ENCODE measurements at regions of chr12 and their contacts with region 1.

Region 1: DNA sequence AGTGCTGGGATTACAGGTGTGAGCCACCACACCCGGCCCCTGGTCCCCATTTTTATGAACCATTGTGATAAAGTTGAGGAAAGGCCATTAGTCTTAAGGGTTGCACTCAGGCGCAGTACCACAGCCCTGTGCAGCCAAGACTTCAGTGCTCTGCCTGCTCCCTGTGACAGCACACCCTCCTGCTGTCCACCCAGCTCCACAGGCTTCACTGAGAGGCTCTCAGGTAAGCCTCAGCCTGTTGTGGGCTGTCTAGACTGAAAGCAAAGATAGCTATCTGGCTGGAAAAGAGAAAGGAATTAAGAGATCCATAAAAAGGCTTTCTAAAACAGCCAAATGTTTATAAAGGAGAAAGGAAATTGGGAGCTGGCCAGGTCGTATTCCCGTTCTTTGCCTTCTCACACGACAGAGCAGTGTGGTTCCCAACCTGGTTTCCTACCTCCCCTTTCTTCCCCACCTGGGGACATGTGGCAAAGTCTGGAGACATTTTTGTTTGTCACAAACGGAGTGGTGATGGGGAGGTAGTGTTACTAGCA is 19.1 kb upstream of the DNM1L start:
- DNase-seq: no peak
- H3K4me3 ChIP-seq: no peak overlapping the region
- CTCF ChIP-seq: no peak

Region 2: DNA sequence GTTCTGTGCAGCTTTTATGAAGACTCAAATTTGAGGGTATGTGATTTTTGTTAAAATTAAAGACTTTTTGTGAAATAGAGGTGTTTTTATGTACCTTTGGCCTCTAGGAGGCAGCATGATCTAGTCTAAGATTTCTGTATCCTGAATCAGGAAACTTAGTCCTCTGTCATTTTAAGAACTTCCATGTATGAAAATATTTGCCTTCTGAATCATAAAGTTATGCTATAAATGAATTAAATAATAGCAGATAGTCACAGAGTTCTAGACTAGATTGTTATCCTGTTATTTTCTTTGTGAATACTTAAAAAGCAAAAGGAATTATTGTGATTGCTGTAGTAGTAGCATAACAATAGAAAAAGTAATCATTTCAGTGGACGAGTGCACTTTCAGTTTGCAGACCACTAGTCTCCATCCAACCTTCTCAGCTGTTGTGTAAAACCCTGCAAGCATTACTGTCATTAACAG is 204.3 kb before region 1 on chr12:
- CTCF ChIA-PET with region 1: interaction called, 98 read pairs
- POLR2A ChIA-PET with region 1: no interaction called
- DNase-seq: peak; percentile 52
- H3K4me3 ChIP-seq: peak overlapping the region; percentile 45
- CTCF ChIP-seq: peak; percentile 26

Region 3: DNA sequence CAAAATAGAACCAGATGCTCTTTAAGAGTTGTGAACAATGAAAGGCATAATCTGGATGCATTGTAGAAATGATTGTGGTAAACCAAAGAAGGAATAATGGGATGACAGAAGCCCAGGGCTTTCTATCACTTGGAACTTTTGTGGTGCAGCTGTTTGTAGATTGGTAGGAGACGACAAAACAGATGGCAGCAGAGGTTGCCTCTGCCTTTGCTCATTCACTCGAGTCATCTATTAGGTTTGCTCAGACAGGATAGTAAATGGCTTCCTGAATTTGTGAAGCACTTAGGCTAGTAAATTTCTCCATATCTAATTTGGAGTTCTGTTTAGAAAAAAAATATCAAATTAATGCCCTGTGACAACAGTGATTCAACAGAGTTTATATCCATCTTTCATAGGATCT is 182.3 kb before region 1 on chr12:
- CTCF ChIA-PET with region 1: interaction called, 12 read pairs
- POLR2A ChIA-PET with region 1: no interaction called
- DNase-seq: no peak
- H3K4me3 ChIP-seq: no peak overlapping the region
- CTCF ChIP-seq: no peak

Region 4: GRCh38 chr12:32586390-32586789 is 73.6 kb before region 1 on chr12:
- CTCF ChIA-PET with region 1: no interaction called
- POLR2A ChIA-PET with region 1: no interaction called
- DNase-seq: no peak
- H3K4me3 ChIP-seq: no peak overlapping the region
- CTCF ChIP-seq: no peak

Region 5: DNA sequence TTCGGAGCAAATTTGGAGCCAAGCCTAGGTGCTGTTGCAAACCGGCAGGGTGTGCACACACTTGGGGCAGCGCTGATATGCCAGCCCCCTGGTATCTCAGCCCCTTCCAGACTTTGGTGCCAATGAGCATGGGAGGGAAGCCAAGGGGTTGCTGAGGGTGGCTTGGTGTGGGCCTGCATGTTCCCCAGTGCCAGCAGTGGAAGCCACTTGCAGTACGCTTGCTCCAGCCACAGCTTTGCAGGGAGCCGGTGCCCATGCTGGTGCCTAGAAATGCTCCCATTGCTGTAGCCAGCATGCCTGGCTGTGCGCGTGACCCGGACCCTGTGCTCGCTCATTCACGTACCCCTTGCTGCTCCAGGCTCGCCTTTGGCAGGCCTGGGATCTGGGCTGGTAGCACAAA is 48.0 kb before region 1 on chr12:
- CTCF ChIA-PET with region 1: no interaction called
- POLR2A ChIA-PET with region 1: no interaction called
- DNase-seq: no peak
- H3K4me3 ChIP-seq: no peak overlapping the region
- CTCF ChIP-seq: no peak

Region 6: GRCh38 chr12:32644431-32644830 is 15.5 kb before region 1 on chr12:
- CTCF ChIA-PET with region 1: interaction called, 14 read pairs
- POLR2A ChIA-PET with region 1: no interaction called
- DNase-seq: no peak
- H3K4me3 ChIP-seq: no peak overlapping the region
- CTCF ChIP-seq: no peak

Region 7: DNA sequence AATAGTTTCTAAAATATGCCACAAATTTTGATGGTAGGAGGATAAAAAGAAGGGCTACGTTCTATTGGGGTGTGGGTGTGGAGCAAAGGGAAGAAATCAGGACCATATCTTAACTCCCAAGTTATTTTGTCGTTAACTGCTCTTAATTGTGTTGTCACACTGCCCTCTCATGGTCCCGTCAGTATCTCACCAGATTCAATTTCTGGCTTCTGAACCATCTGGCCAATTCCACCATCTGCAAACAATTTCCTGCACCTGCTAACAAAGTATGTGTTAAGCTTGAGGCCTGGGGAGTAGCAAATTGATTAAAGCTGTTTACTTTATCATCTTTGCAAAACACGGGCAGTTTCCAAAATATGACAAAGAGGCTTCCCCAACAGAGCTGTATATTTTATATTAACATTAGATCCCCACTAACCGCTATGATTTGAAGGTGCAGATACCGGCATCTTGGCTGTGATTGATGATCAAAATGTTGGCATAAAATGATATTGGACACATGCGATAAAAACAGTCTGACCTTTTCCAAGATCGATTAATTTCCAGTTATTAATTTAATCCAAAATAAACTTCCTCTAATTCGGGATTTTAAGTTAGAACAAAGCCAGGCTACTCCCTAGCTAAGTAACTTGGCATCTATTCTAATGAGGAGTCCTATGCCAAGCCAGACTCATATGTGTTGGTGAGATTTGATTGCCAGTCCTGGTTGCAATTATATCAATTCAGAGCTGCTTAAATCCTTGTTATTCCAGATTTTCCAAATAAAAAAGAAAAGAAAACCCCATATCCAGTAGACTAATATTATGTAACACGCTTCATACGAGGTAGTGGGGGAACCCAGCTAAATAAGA is 12.2 kb after region 1 on chr12:
- CTCF ChIA-PET with region 1: interaction called, 44 read pairs
- POLR2A ChIA-PET with region 1: no interaction called
- DNase-seq: peak; percentile 33
- H3K4me3 ChIP-seq: no peak overlapping the region
- CTCF ChIP-seq: peak; percentile 57

Region 8: DNA sequence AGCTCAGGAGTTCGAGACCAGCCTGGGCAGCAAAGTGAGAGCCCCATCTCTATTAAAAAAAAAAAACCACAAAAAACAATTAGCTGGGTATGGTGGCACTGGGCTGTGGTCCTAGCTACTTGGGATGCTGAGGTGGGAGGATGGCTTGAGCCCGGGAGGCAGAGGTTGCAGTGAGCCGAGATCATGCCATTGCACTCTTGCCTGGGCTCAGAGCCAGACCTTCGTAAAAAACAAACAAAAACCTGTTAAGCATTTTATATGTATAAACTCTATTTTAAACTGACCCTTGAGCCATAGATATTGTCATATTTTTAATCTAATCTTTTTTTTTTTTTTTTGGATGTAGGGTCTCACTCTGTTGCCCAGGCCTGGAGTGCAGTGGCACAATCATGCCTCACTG is 54.8 kb after region 1 on chr12:
- CTCF ChIA-PET with region 1: no interaction called
- POLR2A ChIA-PET with region 1: no interaction called
- DNase-seq: no peak
- H3K4me3 ChIP-seq: no peak overlapping the region
- CTCF ChIP-seq: no peak

Region 9: DNA sequence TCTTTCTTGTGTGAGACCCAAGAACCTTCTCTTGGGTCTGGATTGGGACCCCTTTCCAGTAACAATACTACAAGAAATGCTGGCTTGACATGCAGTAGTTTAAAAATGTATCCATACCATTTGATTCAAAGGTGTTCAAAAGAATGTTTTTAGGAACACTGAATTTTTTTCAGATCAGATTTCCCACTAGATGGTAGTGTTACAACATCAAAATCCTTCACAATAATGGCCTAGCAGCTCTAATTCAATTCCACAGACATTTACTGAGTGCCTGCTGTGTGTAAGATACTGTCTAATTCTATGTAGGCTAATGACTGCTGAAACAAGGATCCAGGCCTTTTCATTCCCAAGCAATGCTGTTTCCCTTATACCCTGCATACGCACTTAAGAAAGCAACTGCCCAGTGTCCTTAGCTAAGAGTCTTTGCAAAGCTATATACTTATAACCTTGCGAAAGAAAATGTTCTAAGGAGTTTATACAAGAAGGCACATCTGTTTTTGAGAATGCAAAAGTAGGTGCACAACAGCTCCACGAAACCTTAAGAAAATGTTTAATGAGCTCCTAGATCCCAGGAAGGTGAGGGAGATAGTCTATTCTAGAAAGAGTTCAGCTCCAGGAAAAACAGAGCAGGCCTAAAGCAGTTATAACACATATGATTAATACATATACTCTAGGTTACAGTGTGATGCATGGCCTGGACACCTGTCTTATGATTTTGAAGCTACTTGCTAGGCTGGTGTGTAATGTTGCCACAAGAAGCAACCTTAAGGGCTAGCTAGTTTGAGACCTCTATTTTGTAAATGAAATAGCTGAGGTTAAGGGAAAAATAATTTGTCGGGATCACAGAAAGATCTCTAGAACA is 287.5 kb after region 1 on chr12:
- CTCF ChIA-PET with region 1: no interaction called
- POLR2A ChIA-PET with region 1: no interaction called
- DNase-seq: no peak
- H3K4me3 ChIP-seq: no peak overlapping the region
- CTCF ChIP-seq: no peak

Measured in AG04449 (cell line).